Dorsolateral prefrontal cortex (tissue), 120 donors: ENCODE measurements at regions of chr5 and their contacts with region 1.

Region 1: DNA sequence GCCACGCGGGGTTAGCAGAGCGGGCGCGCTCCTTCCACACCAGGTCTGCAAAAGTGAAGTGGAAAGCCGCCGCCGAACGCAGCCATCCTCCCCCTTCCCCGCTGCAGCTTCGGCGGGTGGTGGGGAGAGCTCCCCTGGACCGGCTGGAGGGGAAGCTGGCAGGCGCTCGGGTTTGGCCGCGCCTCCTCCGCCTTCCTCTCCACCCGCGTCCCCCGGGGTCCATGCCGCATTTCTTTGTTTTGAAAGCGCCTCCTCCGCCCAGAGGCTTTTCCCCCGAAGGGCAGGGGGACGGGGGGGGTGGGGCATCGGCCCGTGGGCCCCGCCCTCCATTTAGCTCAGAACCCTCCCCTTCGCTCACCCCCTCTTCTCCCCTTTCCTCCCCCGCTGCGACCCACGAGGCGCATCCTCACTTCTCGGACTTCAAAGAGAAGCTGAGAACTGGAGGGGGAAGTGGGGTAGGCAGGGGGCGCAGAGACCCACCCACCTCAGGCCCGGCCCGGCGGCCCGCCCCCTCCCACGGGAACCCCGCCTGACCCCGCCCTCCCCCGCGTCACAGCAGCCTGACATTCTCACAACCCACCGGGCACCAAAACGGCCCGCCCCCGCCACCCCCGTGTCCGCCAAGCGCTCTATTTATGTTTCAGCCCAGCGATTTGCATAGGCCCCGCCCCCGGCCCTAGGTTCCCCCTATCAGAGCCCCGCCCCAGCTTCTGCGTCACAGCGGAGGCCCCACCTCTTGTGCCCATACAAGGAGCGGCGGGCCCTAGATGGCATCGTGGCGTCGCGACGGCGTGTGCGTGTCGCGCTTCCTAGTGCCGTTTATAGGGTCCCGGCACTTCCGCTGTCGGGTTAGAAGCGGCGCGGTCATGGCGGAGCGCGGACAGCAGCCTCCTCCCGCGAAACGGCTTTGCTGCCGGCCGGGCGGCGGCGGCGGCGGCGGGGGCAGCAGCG is at the start of gene ZSWIM6:
- DNase-seq: peak; percentile 98 to 100 (median 100)
- H3K4me3 ChIP-seq: peak within 1 kb of the TSS; percentile 74 to 98 (median 93)
- H3K27ac ChIP-seq: peak within 1 kb of the TSS; percentile 77 to 99 (median 96)
- H3K27me3 ChIP-seq: no peaks in the 10 kb centered on the region
- CTCF ChIP-seq: peak in 12 of 56 donors; percentile 8 to 46 (median 24)
- total RNA-seq, gene ZSWIM6: 22.5 to 67.2 (median 31.6) TPM

Region 2: DNA sequence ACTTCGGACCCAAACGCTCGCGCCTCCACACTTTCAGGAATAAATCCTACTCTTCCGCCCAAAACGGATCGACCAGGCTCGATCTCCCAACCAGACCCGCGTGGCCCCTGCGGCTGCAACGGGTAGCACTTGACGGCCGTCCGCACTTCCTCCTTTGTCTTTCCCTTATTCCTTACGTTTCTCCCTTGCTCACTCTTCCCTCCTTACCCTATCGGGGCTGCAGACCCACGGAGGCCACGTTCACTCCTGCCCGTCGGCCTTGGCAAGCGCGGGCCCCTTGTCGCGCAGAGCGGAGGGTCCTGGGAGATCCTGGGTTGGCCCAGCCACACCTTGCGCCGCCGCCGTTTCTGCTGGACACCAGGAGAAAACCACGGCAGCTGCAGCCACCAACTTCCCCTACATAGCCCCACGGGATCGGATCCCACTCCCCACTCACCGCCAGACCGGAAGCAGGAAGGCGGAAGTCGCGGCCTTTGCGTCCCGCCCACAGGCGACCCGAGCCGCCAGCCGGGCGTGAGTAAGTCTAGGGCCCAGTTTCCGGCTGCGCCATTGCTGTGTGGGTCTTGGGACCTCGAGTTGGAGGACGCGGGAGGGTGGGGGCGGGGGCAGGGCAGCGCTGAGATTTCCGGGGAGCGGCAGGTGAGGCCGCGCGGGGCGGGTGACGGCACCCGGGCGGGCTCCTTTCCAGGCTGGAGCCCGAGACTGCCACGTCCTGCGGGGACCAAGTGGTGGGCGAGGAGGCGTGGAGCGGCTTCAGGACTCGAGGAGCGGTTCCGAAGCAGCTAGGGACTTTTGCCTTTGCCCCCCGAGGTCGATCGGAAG is 169.5 kb before region 1 on chr5 and contains the start of gene SMIM15:
- intact Hi-C with region 1: loop called (anchors 2 to 5 kb)
- DNase-seq: peak; percentile 71 to 89 (median 84)
- H3K4me3 ChIP-seq: peak within 1 kb of the TSS; percentile 62 to 99 (median 90)
- H3K27ac ChIP-seq: peak within 1 kb of the TSS; percentile 17 to 94 (median 85)
- H3K27me3 ChIP-seq: no peaks in the 10 kb centered on the region
- CTCF ChIP-seq: peak in 9 of 56 donors; percentile 5 to 30 (median 11)
- total RNA-seq, gene SMIM15: 15.6 to 39.1 (median 29.7) TPM

Region 3: GRCh38 chr5:61408476-61409168 is 76.9 kb after region 1 on chr5:
- intact Hi-C with region 1: loop called (anchors 2 to 5 kb)
- DNase-seq: peak; percentile 91 to 99 (median 98)
- H3K4me3 ChIP-seq: peak overlapping the region; percentile 1 to 62 (median 41)
- H3K27ac ChIP-seq: peak overlapping the region in 56 of 59 donors; percentile 5 to 85 (median 62)
- H3K27me3 ChIP-seq: no peaks in the 10 kb centered on the region
- CTCF ChIP-seq: peak in 26 of 56 donors; percentile 4 to 58 (median 25)

Region 4: GRCh38 chr5:61525512-61526206 is 194.0 kb after region 1 on chr5:
- intact Hi-C with region 1: loop called in 1 of 2 experiments (anchors 5 kb)
- DNase-seq: no peak
- H3K4me3 ChIP-seq: peak overlapping the region in 1 of 59 donors; percentile 5
- H3K27ac ChIP-seq: peak overlapping the region in 16 of 59 donors; percentile 1 to 49 (median 23)
- H3K27me3 ChIP-seq: no peaks in the 10 kb centered on the region
- CTCF ChIP-seq: no peak

Region 5: GRCh38 chr5:61620699-61621187 is 289.1 kb after region 1 on chr5:
- intact Hi-C with region 1: loop called (anchors 2 to 5 kb)
- DNase-seq: no peak
- H3K4me3 ChIP-seq: peak overlapping the region in 2 of 59 donors; percentile 2 to 5
- H3K27ac ChIP-seq: peak overlapping the region; percentile 77 to 99 (median 96)
- H3K27me3 ChIP-seq: no peaks in the 10 kb centered on the region
- CTCF ChIP-seq: no peak

Region 6: GRCh38 chr5:61658592-61659008 is 326.9 kb after region 1 on chr5:
- intact Hi-C with region 1: loop called in 1 of 2 experiments (anchors 5 kb)
- DNase-seq: peak; percentile 30 to 81 (median 78)
- H3K4me3 ChIP-seq: peak overlapping the region in 23 of 59 donors; percentile 2 to 54 (median 32)
- H3K27ac ChIP-seq: peak overlapping the region in 55 of 59 donors; percentile 23 to 88 (median 72)
- H3K27me3 ChIP-seq: no peaks in the 10 kb centered on the region
- CTCF ChIP-seq: peak; percentile 79 to 98 (median 92)

Region 7: DNA sequence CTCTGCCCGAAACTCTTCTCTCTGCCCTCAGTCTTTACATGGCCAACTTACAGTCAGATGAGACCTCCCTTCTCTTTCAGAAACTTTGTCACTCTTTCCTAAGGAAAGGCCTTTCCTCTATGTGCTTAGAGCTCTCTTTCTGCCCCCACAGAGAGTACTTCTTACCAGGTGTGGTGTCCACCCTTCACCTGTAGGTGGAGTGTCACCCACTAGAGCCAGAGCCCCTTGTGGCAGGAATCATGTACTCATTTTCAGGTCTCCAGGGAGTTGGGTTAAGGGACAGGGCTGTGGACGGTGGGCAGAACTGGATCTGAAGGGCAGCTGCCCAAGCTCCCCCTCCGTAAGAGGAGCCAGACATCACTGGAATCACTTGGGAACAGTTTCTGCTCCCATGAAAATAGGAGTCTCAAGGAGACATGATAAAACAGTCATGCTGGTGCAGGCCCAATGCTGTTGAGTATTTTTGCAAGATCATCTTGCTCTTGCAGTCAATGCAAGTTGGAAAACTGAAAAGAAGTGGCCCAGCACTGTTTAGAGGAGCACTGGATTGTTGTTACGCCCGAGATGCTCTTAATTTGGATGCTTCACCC is 437.1 kb after region 1 on chr5:
- intact Hi-C with region 1: no loop called
- DNase-seq: no peak
- H3K4me3 ChIP-seq: no peak overlapping the region
- H3K27ac ChIP-seq: peak overlapping the region in 1 of 59 donors; percentile 86
- H3K27me3 ChIP-seq: peaks cover 0 to 8% (median 0%) of the 10 kb centered on the region in 45 donors
- CTCF ChIP-seq: peak in 8 of 56 donors; percentile 8 to 30 (median 14)